Dorsolateral prefrontal cortex (tissue), 120 donors: ENCODE measurements at regions of chr6 and their contacts with region 1.

Region 1: GRCh38 chr6:3410385-3411360 is 46.2 kb downstream of the SLC22A23 start:
- DNase-seq: peak in 5 of 10 donors; percentile 44 to 71 (median 64)
- H3K4me3 ChIP-seq: no peak overlapping the region
- H3K27ac ChIP-seq: peak overlapping the region in 27 of 59 donors; percentile 5 to 75 (median 45)
- H3K27me3 ChIP-seq: no peaks in the 10 kb centered on the region
- CTCF ChIP-seq: peak; percentile 35 to 85 (median 76)

Region 2: DNA sequence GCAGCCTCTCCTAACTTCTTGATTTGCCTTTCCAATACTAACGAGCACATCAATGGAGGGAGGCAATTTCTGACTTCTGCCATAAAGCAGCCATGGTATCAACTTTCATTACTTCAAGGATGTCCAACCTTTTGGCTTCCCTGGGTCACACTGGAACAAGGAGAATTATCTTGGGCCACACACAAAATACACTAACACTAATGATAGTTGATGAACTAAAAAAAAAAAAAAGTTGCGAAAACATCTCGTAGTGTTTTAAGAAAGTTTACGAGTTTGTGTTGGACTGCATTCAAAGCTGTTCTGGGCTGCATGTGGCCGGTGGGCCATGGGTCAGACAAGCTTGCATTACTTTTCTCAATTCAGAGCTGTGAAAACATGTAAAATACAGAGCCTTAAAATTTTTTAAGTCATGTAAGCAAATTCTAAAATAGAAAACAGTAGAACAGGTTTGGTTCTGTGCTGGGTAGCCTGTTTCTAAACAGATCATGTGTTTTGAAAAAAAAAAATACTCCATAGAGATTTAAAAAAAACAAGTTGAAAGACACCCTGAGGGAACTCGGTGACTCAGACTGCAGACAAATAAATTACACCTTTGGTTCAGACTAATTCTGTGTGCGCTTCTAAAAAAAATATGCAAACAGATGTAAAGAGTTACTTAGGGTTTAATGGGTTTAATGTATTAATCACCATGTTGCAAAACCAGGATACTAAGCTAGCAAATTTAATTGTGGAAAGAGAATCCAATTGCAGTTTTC is 89.8 kb after region 1 on chr6:
- intact Hi-C with region 1: loop called in 1 of 2 experiments (anchors 10 kb)
- DNase-seq: no peak
- H3K4me3 ChIP-seq: no peak overlapping the region
- H3K27ac ChIP-seq: no peak overlapping the region
- H3K27me3 ChIP-seq: no peaks in the 10 kb centered on the region
- CTCF ChIP-seq: no peak

Region 3: GRCh38 chr6:3509336-3509735 is 98.7 kb after region 1 on chr6:
- intact Hi-C with region 1: loop called (anchors 5 to 10 kb)
- DNase-seq: no peak
- H3K4me3 ChIP-seq: no peak overlapping the region
- H3K27ac ChIP-seq: no peak overlapping the region
- H3K27me3 ChIP-seq: no peaks in the 10 kb centered on the region
- CTCF ChIP-seq: no peak

Region 4: DNA sequence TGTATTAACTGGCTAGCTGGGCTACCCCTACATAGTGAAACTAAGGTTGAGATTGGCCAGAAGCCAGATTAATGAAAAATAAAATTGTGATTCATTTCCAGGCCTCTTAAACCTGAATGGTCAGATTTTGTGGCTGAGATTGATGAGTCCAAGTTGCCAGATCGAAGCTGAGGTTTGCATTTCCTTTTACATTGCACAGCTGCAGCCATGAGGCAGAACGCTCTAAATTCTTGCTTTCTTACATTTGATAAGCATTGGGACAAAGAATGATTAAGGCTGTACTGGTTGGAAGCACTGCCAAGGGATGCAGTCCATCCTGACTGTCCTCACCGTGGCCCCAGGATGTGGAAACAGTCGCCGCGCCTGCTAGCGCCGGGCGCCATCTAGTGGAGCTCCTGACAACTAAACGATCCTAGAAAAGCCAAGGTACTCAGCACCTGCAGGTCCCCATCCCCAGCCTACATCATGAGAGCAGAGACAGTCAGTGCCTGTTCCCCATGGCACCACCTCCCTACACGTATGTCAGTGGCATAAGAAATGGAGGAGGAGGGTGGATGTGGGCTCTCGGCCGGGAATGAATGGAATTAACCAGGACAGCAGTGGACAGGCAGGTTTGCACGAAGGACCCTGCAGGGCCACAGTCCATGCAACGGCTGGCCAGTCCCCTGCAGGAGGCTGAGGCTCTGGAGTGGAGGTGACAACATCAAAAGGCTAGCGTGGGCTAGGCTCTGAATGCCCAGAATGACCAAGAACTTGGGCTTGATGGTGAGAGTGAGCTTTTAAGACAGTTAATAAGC is 321.9 kb after region 1 on chr6:
- intact Hi-C with region 1: loop called in 1 of 2 experiments (anchors 10 kb)
- DNase-seq: peak; percentile 69 to 87 (median 85)
- H3K4me3 ChIP-seq: peak overlapping the region in 6 of 59 donors; percentile 7 to 40 (median 10)
- H3K27ac ChIP-seq: peak overlapping the region in 6 of 59 donors; percentile 7 to 25 (median 10)
- H3K27me3 ChIP-seq: no peaks in the 10 kb centered on the region
- CTCF ChIP-seq: peak; percentile 64 to 98 (median 92)